WTC11 (cell line): ENCODE measurements at regions of chr20 and their contacts with region 1.

Region 1: DNA sequence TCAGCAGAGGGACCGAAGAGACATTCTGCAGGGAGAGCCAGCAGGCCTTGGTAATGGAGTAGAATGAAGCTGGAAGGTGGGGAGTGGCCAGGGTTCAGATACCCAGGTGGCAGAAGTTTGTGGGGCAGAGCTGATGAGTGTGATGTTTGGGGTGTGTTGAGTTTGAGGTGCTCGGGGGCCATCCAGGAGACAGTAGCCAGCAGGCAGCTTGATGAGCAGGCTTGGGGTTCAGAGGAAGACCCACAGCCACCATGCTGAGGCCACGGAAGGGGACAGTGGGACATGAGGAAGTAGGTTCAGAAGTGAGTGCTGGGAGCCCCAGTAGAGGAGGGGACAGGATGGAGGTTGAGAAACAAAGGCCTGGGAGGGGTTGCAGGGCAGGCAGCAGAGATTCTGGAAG is 11.1 kb upstream of the FOXS1 start:
- DNase-seq: peak; percentile 4
- ATAC-seq: no peak
- H3K4me3 Mint-ChIP-seq: no peak overlapping the region
- H3K27ac Mint-ChIP-seq: no peak overlapping the region
- H3K4me1 Mint-ChIP-seq: peaks cover 9% of the 10 kb centered on the region
- H3K27me3 Mint-ChIP-seq: peaks cover 43% of the 10 kb centered on the region
- CTCF ChIP-seq: no peak

Region 2: DNA sequence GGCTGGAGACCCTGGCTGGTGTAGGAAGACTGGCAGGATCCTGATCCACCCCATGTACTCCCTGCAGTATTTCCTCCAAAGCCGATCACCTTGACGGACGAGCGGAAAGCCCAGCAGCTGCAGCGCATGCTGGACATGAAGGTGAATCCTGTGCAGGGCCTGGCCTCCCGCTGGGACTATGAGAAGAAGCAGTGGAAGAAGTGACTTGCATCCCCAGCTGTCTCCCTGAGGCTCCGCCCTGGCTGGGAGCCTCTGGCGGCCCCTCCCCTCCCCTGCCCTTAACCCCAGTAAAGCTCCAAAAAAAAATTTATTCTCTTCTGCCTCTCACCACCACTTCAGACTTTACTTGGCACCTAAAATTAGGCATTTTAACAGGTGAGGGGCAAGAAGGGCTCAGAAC is 211.8 kb before region 1 on chr20:
- CTCF ChIA-PET with region 1: no interaction called
- POLR2A ChIA-PET with region 1: no interaction called
- DNase-seq: no peak
- ATAC-seq: no peak
- H3K4me3 Mint-ChIP-seq: no peak overlapping the region
- H3K27ac Mint-ChIP-seq: no peak overlapping the region
- H3K4me1 Mint-ChIP-seq: no peaks in the 10 kb centered on the region
- H3K27me3 Mint-ChIP-seq: no peaks in the 10 kb centered on the region; the same call in 1 of the 2 replicates
- CTCF ChIP-seq: no peak

Region 3: GRCh38 chr20:31869942-31870725 is 13.6 kb after region 1 on chr20 and contains the starts of genes DUSP15 and TTLL9:
- CTCF ChIA-PET with region 1: interaction called, 22 read pairs
- POLR2A ChIA-PET with region 1: interaction called, 6 read pairs
- DNase-seq: peak; percentile 60
- ATAC-seq: peak; percentile 68
- H3K4me3 Mint-ChIP-seq: peak within 1 kb of the TSS; percentile 93
- H3K27ac Mint-ChIP-seq: peak within 1 kb of the TSS; percentile 45; the same call in 1 of the 2 replicates
- H3K4me1 Mint-ChIP-seq: peaks cover 14% of the 10 kb centered on the region
- H3K27me3 Mint-ChIP-seq: peaks cover 59% of the 10 kb centered on the region
- CTCF ChIP-seq: no peak
- total RNA-seq, gene DUSP15: 1.7 to 2.4 TPM (median 2.0 TPM) in 3 replicates
- total RNA-seq, gene TTLL9: 0.39 TPM in 1 of 3 replicates, not detected in the others

Region 4: GRCh38 chr20:31906001-31906400 is 49.5 kb after region 1 on chr20:
- CTCF ChIA-PET with region 1: interaction called, 12 read pairs
- POLR2A ChIA-PET with region 1: no interaction called
- DNase-seq: peak; percentile 41
- ATAC-seq: peak; percentile 86
- H3K4me3 Mint-ChIP-seq: no peak overlapping the region
- H3K27ac Mint-ChIP-seq: no peak overlapping the region
- H3K4me1 Mint-ChIP-seq: peaks cover 21% of the 10 kb centered on the region
- H3K27me3 Mint-ChIP-seq: no peaks in the 10 kb centered on the region; the same call in 1 of the 2 replicates
- CTCF ChIP-seq: no peak

Region 5: GRCh38 chr20:31956556-31957526 is 100.3 kb after region 1 on chr20:
- CTCF ChIA-PET with region 1: interaction called, 96 read pairs
- POLR2A ChIA-PET with region 1: interaction called, 6 read pairs
- DNase-seq: no peak
- ATAC-seq: no peak
- H3K4me3 Mint-ChIP-seq: no peak overlapping the region
- H3K27ac Mint-ChIP-seq: no peak overlapping the region
- H3K4me1 Mint-ChIP-seq: no peaks in the 10 kb centered on the region
- H3K27me3 Mint-ChIP-seq: peaks cover 26% of the 10 kb centered on the region
- CTCF ChIP-seq: no peak

Region 6: GRCh38 chr20:32052778-32053362 is 196.4 kb after region 1 on chr20:
- CTCF ChIA-PET with region 1: interaction called, 10 read pairs
- POLR2A ChIA-PET with region 1: no interaction called
- DNase-seq: peak; percentile 65
- ATAC-seq: peak; percentile 73
- H3K4me3 Mint-ChIP-seq: peak overlapping the region; percentile 85
- H3K27ac Mint-ChIP-seq: no peak overlapping the region
- H3K4me1 Mint-ChIP-seq: peaks cover 17% of the 10 kb centered on the region
- H3K27me3 Mint-ChIP-seq: peaks cover 64% of the 10 kb centered on the region
- CTCF ChIP-seq: no peak